ENCODE measurements at regions of chr1 and their contacts with region 1.

Region 1: GRCh38 chr1:205485338-205486228 is 18.9 kb upstream of the CDK18 start:
- DNase-seq: peak; percentile 69
- H3K4me3 Mint-ChIP-seq: no peak overlapping the region
- H3K27ac Mint-ChIP-seq: no peak overlapping the region
- H3K4me1 Mint-ChIP-seq: peaks cover 16% of the 10 kb centered on the region
- H3K27me3 Mint-ChIP-seq: peaks cover 35% of the 10 kb centered on the region

Region 2: GRCh38 chr1:205273551-205273982 is 212.0 kb before region 1 on chr1:
- CTCF ChIA-PET with region 1: interaction called, 11 read pairs
- POLR2A ChIA-PET with region 1: no interaction called
- DNase-seq: peak; percentile 88
- H3K4me3 Mint-ChIP-seq: no peak overlapping the region
- H3K27ac Mint-ChIP-seq: no peak overlapping the region
- H3K4me1 Mint-ChIP-seq: peaks cover 25% of the 10 kb centered on the region
- H3K27me3 Mint-ChIP-seq: peaks cover 6% of the 10 kb centered on the region

Region 3: DNA sequence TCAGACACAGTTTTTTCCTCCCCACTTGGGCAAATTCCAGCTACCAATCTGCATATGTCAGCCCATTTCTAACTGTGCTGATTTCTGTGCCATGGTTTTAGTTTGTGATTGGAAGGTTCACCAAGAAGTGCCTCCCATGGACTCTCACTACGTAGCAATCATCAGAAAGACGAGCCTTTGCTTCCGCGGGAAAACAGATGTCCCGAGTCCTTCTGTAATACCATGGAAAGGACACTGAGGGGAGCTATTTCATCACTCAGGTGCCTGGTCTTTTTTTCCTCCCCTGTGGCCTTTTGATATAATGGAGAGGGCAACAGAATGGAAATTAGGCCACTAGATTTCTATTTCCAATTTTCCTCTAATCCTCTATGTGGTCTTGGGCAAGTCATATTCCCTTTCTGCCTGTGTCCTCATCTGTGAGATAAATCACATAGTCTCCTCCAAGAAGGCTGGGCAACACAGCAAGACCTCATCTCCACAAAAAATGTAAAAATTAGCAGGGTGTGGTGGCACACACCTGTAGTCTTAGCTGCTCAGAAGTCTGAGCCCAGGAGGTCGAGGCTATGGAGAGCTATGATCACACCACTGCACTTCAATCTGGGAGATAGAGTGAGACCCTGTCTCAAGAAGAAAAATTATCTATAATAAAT is 88.5 kb before region 1 on chr1:
- CTCF ChIA-PET with region 1: interaction called, 81 read pairs
- POLR2A ChIA-PET with region 1: interaction called, 7 read pairs
- DNase-seq: no peak
- H3K4me3 Mint-ChIP-seq: no peak overlapping the region
- H3K27ac Mint-ChIP-seq: no peak overlapping the region
- H3K4me1 Mint-ChIP-seq: no peaks in the 10 kb centered on the region
- H3K27me3 Mint-ChIP-seq: peaks cover 30% of the 10 kb centered on the region

Region 4: DNA sequence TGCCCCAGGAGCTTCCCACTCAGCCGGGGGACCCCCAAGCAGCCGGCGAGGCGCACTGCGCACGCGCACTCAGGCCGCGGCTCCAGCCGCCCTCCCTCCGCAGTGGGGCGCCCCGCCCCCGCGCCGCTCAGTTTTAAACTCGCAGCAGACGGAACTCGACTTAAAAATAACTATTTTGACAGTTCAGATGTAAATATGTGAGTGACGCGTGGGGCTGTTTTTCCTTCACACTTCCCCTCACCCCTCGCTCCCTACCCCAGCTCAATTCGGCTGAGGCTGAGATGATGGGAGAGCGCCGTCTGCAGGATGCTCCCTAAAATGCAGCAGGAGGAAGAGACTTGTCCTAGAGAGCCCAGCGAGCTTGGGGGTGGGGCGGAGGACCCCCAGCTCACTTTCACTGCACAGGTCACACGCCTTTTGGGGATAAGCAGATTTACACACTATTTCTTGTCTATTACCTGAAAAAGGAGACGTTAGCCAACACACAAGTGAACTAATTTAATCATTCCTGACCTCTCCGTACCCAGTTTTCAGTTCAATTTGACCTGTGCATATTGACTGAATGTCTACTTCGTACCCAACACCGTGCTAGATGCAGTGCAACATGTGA is 54.8 kb before region 1 on chr1:
- CTCF ChIA-PET with region 1: interaction called, 16 read pairs
- POLR2A ChIA-PET with region 1: no interaction called
- DNase-seq: peak; percentile 63
- H3K4me3 Mint-ChIP-seq: peak overlapping the region; percentile 76
- H3K27ac Mint-ChIP-seq: no peak overlapping the region
- H3K4me1 Mint-ChIP-seq: peaks cover 10% of the 10 kb centered on the region
- H3K27me3 Mint-ChIP-seq: peaks cover 30% of the 10 kb centered on the region

Region 5: DNA sequence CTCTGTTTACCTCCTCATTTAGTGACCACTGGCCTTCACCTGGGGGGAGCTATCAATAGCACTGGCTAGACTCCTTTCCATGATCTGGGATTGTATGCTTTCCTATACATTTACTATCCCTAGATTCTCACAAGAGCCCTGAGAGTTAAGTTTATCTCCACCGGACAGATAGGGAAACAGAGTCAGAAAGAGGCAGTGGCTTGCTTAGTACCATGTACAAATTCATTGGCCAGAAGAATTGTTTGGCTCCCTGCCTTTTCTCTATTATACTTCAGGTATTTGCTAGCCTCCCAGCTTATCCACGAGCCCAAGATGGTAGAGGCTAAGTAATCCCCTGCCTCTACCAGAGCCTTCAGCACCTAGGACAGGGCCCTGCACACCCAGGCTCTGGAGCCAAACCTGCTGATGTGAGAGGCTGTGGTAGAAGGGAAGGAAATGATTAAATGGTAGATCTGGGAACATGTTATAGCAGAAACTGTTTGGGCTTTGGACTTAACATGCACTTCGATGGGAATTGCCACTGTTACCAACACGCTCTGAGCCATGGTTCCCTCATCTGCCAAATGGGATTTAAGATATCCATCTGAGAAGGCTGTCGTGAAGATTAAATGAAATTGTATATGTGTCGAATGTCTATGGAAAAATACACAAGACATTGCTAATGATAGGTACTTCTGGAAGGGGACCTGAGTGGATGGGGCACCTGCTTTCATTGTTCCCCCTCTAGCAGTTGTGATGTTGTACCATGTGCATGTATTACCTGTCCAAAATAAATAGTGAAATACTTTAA is 26.6 kb before region 1 on chr1:
- CTCF ChIA-PET with region 1: interaction called, 16 read pairs
- POLR2A ChIA-PET with region 1: no interaction called
- DNase-seq: peak; percentile 54
- H3K4me3 Mint-ChIP-seq: no peak overlapping the region
- H3K27ac Mint-ChIP-seq: no peak overlapping the region
- H3K4me1 Mint-ChIP-seq: peaks cover 11% of the 10 kb centered on the region
- H3K27me3 Mint-ChIP-seq: peaks cover 58% of the 10 kb centered on the region

Region 6: GRCh38 chr1:205591522-205592351 is 106.2 kb after region 1 on chr1:
- CTCF ChIA-PET with region 1: interaction called, 10 read pairs
- POLR2A ChIA-PET with region 1: no interaction called
- DNase-seq: peak; percentile 89
- H3K4me3 Mint-ChIP-seq: peak overlapping the region; percentile 74
- H3K27ac Mint-ChIP-seq: peak overlapping the region; percentile 64
- H3K4me1 Mint-ChIP-seq: peaks cover 44% of the 10 kb centered on the region
- H3K27me3 Mint-ChIP-seq: no peaks in the 10 kb centered on the region

Measured in activated CD4-positive, alpha-beta memory T cell treated with anti-CD3 and anti-CD28 coated beads, Interleukin-2, amount 10 ng/mL, durations not matched to agents 7 days and 5 days (primary cell).